ENCODE measurements at regions of chr6 and their contacts with region 1.

Region 1: DNA sequence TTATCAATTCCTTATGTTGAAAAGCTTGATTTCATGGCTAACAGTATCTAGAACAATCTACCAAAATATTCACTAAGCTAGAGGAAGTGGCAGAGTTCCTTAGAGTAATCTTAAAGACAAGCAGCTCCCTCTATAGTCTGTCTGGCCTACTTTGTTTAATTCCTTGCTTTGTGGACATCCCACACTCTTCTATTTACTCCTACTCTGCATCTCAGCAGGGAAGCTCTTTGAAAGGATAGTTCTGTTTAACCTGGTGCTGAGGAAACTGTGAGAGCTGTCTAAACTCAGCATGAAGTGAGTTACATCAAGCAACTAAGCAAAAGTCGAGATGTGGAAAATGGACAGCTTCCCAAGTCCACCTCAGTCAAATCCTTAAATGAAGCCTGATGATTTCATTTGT is 4.3 kb downstream of the REV3L start:
- DNase-seq: peak; percentile 35
- ATAC-seq: no peak
- H3K4me3 ChIP-seq: no peak overlapping the region
- H3K27ac ChIP-seq: no peak overlapping the region; the same call in 1 of the 2 replicates
- H3K4me1 ChIP-seq: peaks cover 30 to 40% of the 10 kb centered on the region in 2 experiments
- H3K27me3 ChIP-seq: no peaks in the 10 kb centered on the region
- CTCF ChIP-seq: peak; percentile 15 to 57 (median 35); a peak in 3 of 6 replicates
- POLR2A ChIP-seq: no peak
- RAD21 ChIP-seq: peak; percentile 71

Region 2: DNA sequence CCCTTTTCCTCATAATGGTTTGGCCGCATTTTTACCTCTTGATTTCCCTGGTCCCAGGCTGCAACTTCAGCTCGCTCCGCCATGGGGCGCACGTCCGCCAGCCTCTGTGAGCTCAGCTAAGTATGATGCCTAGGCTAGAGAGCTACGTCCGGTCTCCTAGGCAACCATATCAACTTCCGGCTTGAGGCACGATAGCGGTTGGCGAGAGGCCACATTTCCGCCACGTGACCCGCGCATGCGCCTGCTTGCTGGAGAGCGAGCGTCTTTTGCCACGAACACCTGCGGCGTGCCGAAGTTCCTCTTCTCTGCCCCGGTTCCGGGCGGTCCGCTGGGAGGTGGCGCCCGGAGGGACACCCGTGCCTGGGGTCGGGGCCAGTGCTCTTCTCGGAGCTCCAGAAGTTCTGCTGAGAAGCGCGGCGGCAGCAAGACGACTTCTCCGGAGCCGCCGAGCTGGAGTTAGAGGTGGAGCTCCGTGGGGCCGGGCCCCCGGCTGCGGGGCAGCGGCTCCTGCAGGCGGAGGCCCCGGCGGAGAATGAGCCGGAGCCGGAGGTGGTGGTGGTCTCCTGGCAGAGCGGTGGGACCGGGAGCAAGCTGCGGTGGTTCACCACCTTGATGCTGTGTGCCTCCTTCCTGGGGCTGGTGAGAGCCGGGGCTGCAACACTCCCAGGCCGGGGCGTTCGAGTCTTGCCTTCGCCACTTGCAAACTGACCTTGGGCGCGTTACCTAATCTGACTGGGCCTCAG is 219.5 kb before region 1 on chr6:
- CTCF ChIA-PET with region 1: interaction called, 23 read pairs
- POLR2A ChIA-PET with region 1: interaction called, 4 read pairs
- RAD21 ChIA-PET with region 1: interaction called in 1 of 2 experiments, 3 read pairs
- intact Hi-C with region 1: loop called (anchors 2 kb)
- DNase-seq: peak; percentile 98
- ATAC-seq: peak; percentile 96
- H3K4me3 ChIP-seq: peak overlapping the region; percentile 72 to 82
- H3K27ac ChIP-seq: peak overlapping the region; percentile 61
- H3K4me1 ChIP-seq: peaks cover 14 to 43% of the 10 kb centered on the region in 2 experiments
- H3K27me3 ChIP-seq: no peaks in the 10 kb centered on the region
- CTCF ChIP-seq: peak; percentile 91 to 96 (median 93)
- POLR2A ChIP-seq: peak; percentile 74
- RAD21 ChIP-seq: peak; percentile 97

Region 3: GRCh38 chr6:111361648-111362047 is 117.1 kb before region 1 on chr6:
- CTCF ChIA-PET with region 1: interaction called, 8 read pairs
- POLR2A ChIA-PET with region 1: no interaction called
- RAD21 ChIA-PET with region 1: no interaction called
- intact Hi-C with region 1: loop called (anchors 10 kb)
- DNase-seq: peak; percentile 10
- ATAC-seq: peak; percentile 73
- H3K4me3 ChIP-seq: no peak overlapping the region
- H3K27ac ChIP-seq: no peak overlapping the region
- H3K4me1 ChIP-seq: no peaks in the 10 kb centered on the region
- H3K27me3 ChIP-seq: no peaks in the 10 kb centered on the region
- CTCF ChIP-seq: peak; percentile 59 to 71 (median 63)
- POLR2A ChIP-seq: no peak
- RAD21 ChIP-seq: peak; percentile 77

Measured in HCT116 (cell line).